Activated CD8-positive, alpha-beta T cell treated with anti-CD3 and anti-CD28 coated beads for 36 hours (primary cell): ENCODE measurements at regions of chr2 and their contacts with region 1.

Region 1: GRCh38 chr2:290090-290722 is 2.3 kb upstream of the ALKAL2 start:
- DNase-seq: peak; percentile 63
- ATAC-seq: no peak
- H3K4me3 Mint-ChIP-seq: peak overlapping the region; percentile 49
- H3K27ac Mint-ChIP-seq: no peak overlapping the region
- H3K4me1 Mint-ChIP-seq: peaks cover 12% of the 10 kb centered on the region
- H3K27me3 Mint-ChIP-seq: peaks cover 28% of the 10 kb centered on the region
- CTCF ChIP-seq: peak; percentile 63

Region 2: DNA sequence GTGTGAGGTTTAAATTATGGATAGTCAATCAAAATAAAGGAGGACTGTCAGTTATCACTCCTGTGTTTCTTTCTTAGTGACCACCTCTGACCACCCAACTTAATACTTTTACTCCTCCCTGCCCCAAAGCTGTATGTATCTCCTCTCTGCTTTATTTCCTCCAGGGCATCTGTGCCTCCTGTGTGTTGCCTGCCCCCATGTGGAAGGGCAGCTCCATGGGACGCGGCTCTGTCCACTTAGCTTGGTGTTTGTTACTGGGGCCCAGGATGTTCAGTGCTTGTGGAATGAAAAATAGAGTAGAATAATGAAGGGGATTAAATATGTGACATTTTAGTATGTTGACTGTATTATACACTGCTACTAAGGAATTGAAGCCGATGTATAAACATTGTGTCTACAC is 15.7 kb before region 1 on chr2:
- CTCF ChIA-PET with region 1: interaction called, 14 read pairs
- POLR2A ChIA-PET with region 1: interaction called, 7 read pairs
- intact Hi-C with region 1: no loop called
- DNase-seq: no peak
- ATAC-seq: no peak
- H3K4me3 Mint-ChIP-seq: no peak overlapping the region
- H3K27ac Mint-ChIP-seq: no peak overlapping the region
- H3K4me1 Mint-ChIP-seq: peaks cover 25% of the 10 kb centered on the region
- H3K27me3 Mint-ChIP-seq: no peaks in the 10 kb centered on the region
- CTCF ChIP-seq: no peak

Region 3: GRCh38 chr2:579351-579886 is 289.2 kb after region 1 on chr2:
- CTCF ChIA-PET with region 1: no interaction called
- POLR2A ChIA-PET with region 1: no interaction called
- intact Hi-C with region 1: no loop called
- DNase-seq: no peak
- ATAC-seq: peak; percentile 30
- H3K4me3 Mint-ChIP-seq: no peak overlapping the region
- H3K27ac Mint-ChIP-seq: no peak overlapping the region
- H3K4me1 Mint-ChIP-seq: no peaks in the 10 kb centered on the region
- H3K27me3 Mint-ChIP-seq: peaks cover 3% of the 10 kb centered on the region
- CTCF ChIP-seq: no peak